ENCODE measurements at regions of chr11 and their contacts with region 1.

Region 1: DNA sequence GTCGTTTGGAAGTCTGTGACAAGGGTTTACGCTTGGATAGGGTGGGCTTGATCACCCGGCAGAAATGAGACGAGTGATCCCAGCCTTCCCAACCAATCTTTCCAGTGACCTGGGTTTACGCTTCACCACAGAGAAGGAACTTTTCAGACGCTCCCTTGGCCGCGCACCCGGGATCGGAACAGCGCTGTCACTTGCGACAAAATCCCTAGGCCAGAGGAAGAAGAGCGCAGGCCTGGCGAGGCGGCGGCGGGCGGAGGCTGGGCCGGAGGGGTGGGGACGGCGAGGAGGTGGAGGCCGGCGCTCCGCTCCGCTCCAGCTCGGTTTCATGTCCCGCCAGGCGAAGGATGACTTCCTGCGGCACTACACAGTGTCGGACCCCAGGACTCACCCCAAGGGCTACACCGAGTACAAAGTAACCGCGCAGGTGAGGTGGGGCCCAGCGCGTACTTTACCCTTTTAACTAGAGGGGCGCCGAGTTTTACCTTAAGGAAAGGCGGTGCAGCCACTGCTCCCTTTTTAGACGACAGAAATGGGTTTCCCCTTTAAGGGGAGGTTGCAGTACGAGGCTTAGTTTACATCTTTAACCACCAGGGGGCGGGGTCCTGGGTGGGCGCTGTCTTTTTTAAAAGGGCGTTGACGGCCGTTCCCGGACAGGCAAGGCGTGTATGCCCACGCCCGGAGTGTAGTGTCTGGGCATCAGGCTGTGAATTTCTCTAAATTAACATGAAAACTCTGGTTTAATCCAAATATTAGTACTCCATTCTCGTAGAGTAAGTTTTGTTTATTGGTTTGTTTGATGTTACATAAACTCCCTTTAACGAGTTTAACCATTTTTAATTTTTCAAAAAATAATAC is at the start of gene SNX15:
- DNase-seq: peak; percentile 92 to 99 (median 94)

Region 2: GRCh38 chr11:64924102-64924851 is 103.2 kb before region 1 on chr11 and contains the start of gene PPP2R5B:
- intact Hi-C with region 1: loop called (anchors 1 kb)
- DNase-seq: peak; percentile 91 to 99 (median 96)

Region 3: GRCh38 chr11:65040847-65041621 is 13.6 kb after region 1 on chr11 and contains the start of gene SAC3D1:
- intact Hi-C with region 1: loop called (anchors 1 kb)
- DNase-seq: peak; percentile 81 to 98 (median 90)

Region 4: DNA sequence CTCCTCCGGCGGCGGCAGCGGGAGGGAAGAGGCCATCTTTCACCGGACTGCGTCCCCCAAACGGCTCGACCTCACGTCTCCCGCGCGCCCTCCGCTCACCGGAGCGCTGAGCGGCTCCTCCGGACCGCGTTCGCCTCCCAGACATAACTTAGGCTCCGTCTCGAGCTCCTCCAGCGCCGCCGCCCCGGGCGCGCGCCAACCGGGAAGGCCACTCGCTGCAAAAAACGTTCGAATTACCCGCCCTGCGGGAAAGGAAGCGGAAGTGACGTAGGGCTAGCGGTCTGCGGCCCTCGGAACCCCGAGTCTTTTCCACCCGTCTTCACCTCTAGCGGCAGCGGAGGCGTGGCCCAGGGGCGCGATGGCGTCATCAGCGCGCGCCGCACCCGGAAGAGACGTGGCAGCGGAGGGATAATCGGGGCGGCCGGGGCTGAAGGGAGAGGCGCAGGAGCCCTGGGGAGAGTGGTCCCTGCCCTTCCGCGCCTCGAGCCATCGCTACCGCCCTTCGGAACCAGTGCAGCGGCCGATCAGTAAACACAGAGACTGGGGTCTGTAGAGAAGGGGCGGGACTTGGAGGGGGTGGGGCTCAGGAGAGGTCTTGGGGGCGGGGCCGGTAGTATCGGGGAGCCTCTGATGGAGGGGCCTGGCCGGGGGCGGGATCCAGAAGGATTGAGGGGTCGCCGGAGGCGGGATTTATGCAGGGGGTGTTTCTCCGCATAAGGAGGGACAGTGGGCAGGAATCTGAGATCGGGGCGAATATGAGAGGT is 56.6 kb after region 1 on chr11 and contains the starts of genes CDCA5 and ZFPL1:
- intact Hi-C with region 1: loop called (anchors 5 kb)
- DNase-seq: peak; percentile 95 to 100 (median 98)

Region 5: DNA sequence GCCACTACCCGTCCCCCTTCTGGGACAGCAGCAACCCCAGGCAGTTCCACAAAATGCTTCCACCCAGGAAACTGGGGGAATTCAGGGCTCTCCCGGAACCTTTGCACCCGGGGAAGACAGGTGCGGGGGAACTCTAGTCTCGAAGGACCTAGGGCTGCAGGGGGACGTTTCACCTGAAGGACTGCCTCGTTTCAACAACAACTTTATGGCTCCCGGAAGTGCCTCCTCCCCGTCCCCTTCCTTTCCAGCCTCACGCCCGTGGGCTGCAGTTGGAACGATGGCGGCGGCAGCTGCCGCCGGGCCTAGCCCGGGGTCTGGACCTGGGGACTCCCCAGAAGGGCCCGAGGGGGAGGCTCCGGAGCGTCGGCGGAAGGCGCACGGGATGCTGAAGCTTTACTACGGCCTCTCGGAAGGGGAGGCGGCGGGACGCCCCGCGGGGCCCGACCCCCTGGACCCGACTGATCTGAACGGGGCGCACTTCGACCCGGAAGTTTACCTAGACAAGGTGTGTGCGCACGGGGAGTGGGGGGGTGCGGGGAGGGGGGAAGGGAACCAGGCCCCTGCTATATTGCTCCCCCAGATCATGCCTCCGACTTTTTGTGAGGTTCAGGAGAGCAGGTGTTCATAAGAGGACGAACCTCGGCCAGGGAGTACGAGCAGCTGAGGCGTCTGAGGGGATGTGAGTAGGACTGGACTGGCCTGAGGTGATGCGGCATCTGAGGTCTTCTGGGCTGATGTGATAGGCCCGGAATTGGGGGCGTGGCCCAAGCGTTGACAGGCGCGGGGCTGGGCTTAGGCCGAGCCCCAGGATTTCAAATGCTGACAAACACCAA is 68.8 kb after region 1 on chr11 and contains the start of gene VPS51:
- intact Hi-C with region 1: loop called (anchors 5 kb)
- DNase-seq: peak; percentile 79 to 98 (median 84)

Region 6: DNA sequence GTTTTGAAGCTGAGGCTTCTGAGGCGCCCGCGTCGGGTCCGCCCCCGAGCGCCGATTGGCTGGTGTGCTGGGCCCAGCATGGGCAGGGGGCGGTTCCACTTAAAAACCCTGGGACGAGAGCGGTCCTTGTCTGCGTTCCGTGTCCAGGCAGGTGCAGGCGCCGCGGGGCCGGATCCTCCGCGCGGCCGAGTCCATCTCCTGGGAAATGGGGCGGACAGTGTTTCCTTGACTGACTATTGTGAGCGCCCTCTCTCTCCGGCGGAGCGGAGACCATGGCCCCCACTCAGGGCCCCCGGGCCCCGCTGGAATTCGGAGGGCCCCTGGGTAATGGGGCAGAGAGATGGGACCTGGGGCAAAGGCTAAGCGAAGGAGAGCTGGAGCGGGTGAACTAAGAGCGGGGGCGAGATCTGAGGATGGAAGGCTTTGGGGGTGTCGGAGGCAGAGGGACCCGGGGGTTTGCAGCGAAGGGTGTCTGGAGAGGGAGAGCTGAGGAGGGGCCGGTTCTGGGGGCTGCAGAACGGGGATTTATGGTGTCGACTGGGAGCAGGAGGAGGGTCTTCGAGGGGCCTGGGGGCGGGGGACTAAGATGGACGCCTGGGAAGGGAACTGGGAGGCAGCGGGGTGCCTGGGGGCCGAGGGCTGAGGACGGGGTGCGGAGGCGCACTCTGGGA is 84.4 kb after region 1 on chr11 and contains the start of gene TM7SF2:
- intact Hi-C with region 1: loop called (anchors 5 kb)
- DNase-seq: peak; percentile 94 to 100 (median 98)

Measured in posterior cingulate gyrus (tissue), 11 donors.